Left ventricle myocardium superior (tissue), 1 donor: ENCODE measurements at regions of chr12 and their contacts with region 1.

Region 1: GRCh38 chr12:79555028-79555930 is 135.5 kb downstream of the PAWR start:
- DNase-seq: no peak
- ATAC-seq: peak; percentile 32

Region 2: GRCh38 chr12:79737875-79738718 is 182.8 kb after region 1 on chr12:
- intact Hi-C with region 1: loop called (anchors 10 kb)
- DNase-seq: no peak
- ATAC-seq: no peak

Region 3: GRCh38 chr12:79776111-79776510 is 220.8 kb after region 1 on chr12:
- intact Hi-C with region 1: no loop called
- DNase-seq: no peak
- ATAC-seq: peak; percentile 64

Region 4: DNA sequence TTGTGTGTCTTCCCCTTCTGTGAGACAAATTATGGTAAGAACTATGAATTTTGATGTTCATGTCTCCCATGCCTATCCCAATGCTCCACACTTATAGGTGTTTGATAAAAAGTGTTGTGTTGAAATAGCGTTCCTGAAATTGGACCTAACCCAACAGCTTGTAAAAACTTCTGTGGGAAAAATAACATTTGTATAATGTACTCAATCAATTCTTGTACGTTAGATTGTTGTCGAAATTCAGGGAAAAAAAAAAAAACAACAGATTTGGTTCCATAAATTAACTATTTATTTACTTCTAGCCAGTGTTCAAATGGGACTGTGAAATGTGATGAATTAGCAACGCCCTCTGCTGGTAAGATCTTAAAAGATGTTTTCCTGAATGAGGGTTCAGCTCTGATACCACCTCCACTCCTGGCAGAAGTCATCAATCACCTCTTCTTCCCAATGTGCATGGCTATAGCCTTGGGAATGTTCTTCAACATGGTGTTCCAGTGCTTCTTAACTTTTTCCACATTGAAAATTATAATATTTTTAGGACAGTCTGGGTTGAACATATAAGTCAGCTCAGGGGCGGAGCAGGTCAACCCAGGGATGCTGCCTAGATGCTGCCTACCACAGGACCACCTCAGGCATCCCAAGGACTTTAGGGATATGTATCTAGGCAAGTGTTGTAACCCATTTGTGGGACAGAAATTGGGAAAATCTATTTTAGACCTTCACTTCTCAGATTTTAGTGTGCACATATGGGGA is 714.7 kb after region 1 on chr12:
- intact Hi-C with region 1: loop called (anchors 5 kb)
- DNase-seq: no peak
- ATAC-seq: peak; percentile 55